ENCODE measurements at regions of chr10 and their contacts with region 1.

Region 1: DNA sequence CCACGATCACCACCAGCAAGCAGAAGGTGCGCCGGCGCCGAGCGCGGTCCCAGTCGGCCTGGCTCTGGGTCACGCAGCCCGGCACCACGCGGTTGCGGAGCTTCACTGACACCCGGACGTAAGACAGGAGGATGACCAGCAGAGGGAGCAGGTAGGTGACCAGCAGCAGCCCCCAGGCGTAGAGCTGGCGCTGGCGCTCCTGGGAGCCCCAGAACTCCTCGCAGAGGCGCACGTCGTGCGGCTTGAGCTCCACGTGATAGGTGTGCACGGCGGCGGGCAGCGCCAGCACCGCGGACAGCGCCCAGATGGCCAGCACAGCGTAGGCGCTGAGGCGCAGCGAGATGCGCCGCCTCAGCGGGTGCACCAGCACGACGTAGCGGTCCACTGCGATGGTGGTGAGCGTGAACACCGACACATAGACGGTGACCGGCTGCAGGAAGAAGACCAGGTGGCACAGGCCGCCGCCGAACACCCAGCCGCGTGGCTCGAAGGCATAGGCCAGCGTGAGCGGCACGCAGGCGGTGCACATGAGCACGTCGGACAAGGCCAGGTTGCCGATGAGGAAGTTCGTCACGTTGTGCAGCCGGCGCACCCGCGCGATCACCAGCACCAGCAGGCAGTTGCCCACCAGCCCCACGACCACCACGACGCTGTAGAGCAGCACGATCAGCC is 920 bp downstream of the PRLHR start:
- DNase-seq: peak; percentile 94
- ATAC-seq: peak; percentile 88
- H3K4me3 Mint-ChIP-seq: peak overlapping the region; percentile 82
- H3K27ac Mint-ChIP-seq: no peak overlapping the region
- H3K4me1 Mint-ChIP-seq: peaks cover 21% of the 10 kb centered on the region
- H3K27me3 Mint-ChIP-seq: peaks cover 56% of the 10 kb centered on the region
- CTCF ChIP-seq: peak; percentile 54; the same call in 1 of the 2 replicates

Region 2: DNA sequence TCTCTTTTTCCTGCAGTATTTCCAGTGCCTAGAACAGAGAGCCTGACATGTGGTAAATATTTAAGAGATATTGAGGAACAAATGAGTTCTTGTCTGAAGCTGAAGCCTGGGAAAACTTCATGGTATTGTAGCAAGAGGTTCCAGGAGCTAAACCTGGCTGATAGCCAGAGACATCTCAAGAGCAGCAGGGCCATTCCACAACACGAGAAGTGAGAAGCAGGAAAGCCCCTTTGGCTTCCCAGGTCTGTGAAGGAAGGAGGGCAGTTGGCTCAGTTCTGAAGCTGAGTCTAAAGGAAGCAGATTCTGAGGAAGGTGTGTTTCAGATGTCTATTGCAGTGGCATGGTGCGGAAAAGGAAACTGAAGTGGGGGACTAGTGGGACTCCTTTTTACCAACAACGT is 188.6 kb before region 1 on chr10:
- CTCF ChIA-PET with region 1: no interaction called
- POLR2A ChIA-PET with region 1: no interaction called
- DNase-seq: no peak
- ATAC-seq: no peak
- H3K4me3 Mint-ChIP-seq: no peak overlapping the region
- H3K27ac Mint-ChIP-seq: no peak overlapping the region
- H3K4me1 Mint-ChIP-seq: peaks cover 21% of the 10 kb centered on the region
- H3K27me3 Mint-ChIP-seq: no peaks in the 10 kb centered on the region
- CTCF ChIP-seq: no peak

Region 3: GRCh38 chr10:118568327-118568848 is 26.1 kb before region 1 on chr10:
- CTCF ChIA-PET with region 1: interaction called, 26 read pairs
- POLR2A ChIA-PET with region 1: interaction called, 3 read pairs
- DNase-seq: peak; percentile 17
- ATAC-seq: peak; percentile 34; the same call in 1 of the 2 replicates
- H3K4me3 Mint-ChIP-seq: no peak overlapping the region
- H3K27ac Mint-ChIP-seq: no peak overlapping the region
- H3K4me1 Mint-ChIP-seq: peaks cover 4% of the 10 kb centered on the region
- H3K27me3 Mint-ChIP-seq: peaks cover 3% of the 10 kb centered on the region; the same call in 1 of the 2 replicates
- CTCF ChIP-seq: peak; percentile 79

Region 4: GRCh38 chr10:118626953-118627352 is 32.4 kb after region 1 on chr10:
- CTCF ChIA-PET with region 1: interaction called, 37 read pairs
- POLR2A ChIA-PET with region 1: interaction called, 3 read pairs
- DNase-seq: peak; percentile 40
- ATAC-seq: peak; percentile 93
- H3K4me3 Mint-ChIP-seq: no peak overlapping the region
- H3K27ac Mint-ChIP-seq: no peak overlapping the region
- H3K4me1 Mint-ChIP-seq: peaks cover 25% of the 10 kb centered on the region
- H3K27me3 Mint-ChIP-seq: peaks cover 12% of the 10 kb centered on the region
- CTCF ChIP-seq: peak; percentile 57; the same call in 1 of the 2 replicates

Region 5: GRCh38 chr10:118712930-118713634 is 118.6 kb after region 1 on chr10:
- CTCF ChIA-PET with region 1: interaction called, 31 read pairs
- POLR2A ChIA-PET with region 1: no interaction called
- DNase-seq: peak; percentile 63
- ATAC-seq: peak; percentile 98
- H3K4me3 Mint-ChIP-seq: no peak overlapping the region
- H3K27ac Mint-ChIP-seq: no peak overlapping the region
- H3K4me1 Mint-ChIP-seq: no peaks in the 10 kb centered on the region
- H3K27me3 Mint-ChIP-seq: no peaks in the 10 kb centered on the region
- CTCF ChIP-seq: 0 out of 2 replicates have a peak, but pooled peaks have one; percentile 43

Region 6: GRCh38 chr10:118738406-118738805 is 143.9 kb after region 1 on chr10:
- CTCF ChIA-PET with region 1: interaction called, 10 read pairs
- POLR2A ChIA-PET with region 1: no interaction called
- DNase-seq: no peak
- ATAC-seq: no peak
- H3K4me3 Mint-ChIP-seq: no peak overlapping the region
- H3K27ac Mint-ChIP-seq: no peak overlapping the region
- H3K4me1 Mint-ChIP-seq: peaks cover 62% of the 10 kb centered on the region
- H3K27me3 Mint-ChIP-seq: no peaks in the 10 kb centered on the region
- CTCF ChIP-seq: no peak

Measured in WTC11 (cell line).